Left lung (tissue), 14 donors: ENCODE measurements at regions of chr1 and their contacts with region 1.

Region 1: GRCh38 chr1:44849575-44850132 is 6.6 kb upstream of the PTCH2 start:
- DNase-seq: no peak
- ATAC-seq: no peak
- H3K4me3 ChIP-seq: no peak overlapping the region
- H3K27ac ChIP-seq: no peak overlapping the region
- H3K4me1 ChIP-seq: no peaks in the 10 kb centered on the region
- H3K27me3 ChIP-seq: no peaks in the 10 kb centered on the region
- CTCF ChIP-seq: no peak

Region 2: GRCh38 chr1:44786138-44786840 is 63.4 kb before region 1 on chr1:
- intact Hi-C with region 1: loop called in 1 of 2 experiments (anchors 10 kb)
- DNase-seq: peak in 3 of 4 donors; percentile 68 to 94 (median 79)
- ATAC-seq: peak; percentile 92
- H3K4me3 ChIP-seq: peak overlapping the region; percentile 21 to 41
- H3K27ac ChIP-seq: peak overlapping the region in 1 of 2 donors; percentile 48
- H3K4me1 ChIP-seq: peaks cover 16 to 37% of the 10 kb centered on the region in 2 donors
- H3K27me3 ChIP-seq: peaks cover 0 to 9% of the 10 kb centered on the region in 2 donors
- CTCF ChIP-seq: peak; percentile 96 to 98